HepG2 (cell line): ENCODE measurements at regions of chr1 and their contacts with region 1.

Region 1: GRCh38 chr1:102191723-102192122 is 195.0 kb upstream of the OLFM3 start:
- DNase-seq: peak; percentile 45
- ATAC-seq: peak; percentile 81
- H3K4me3 ChIP-seq: no peak overlapping the region
- H3K27ac ChIP-seq: no peak overlapping the region
- H3K4me1 ChIP-seq: no peaks in the 10 kb centered on the region
- H3K27me3 ChIP-seq: no peaks in the 10 kb centered on the region
- CTCF ChIP-seq: peak; percentile 56
- EP300 ChIP-seq: no peak
- POLR2A ChIP-seq: no peak
- RAD21 ChIP-seq: no peak

Region 2: DNA sequence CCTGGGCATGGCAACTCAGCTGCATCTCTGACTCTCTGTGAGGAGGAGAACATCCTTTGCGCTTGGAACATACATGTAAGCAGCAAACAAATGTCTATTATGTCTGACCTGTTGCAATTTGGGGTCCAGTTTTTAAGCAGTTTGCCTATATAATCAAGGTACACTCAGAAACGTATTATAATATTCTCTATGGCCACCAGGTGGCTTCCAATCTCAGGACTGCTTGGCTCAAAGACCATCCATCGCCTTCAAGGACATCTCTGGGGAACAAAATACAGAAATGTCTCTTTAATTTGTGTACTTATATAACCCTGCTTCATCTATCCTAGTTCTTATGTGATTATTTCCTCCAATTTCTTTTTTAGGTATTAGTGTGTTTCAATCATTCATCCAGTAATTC is 422.2 kb before region 1 on chr1:
- CTCF ChIA-PET with region 1: no interaction called
- POLR2A ChIA-PET with region 1: no interaction called
- in situ Hi-C with region 1: no loop called
- intact Hi-C with region 1: loop called (anchors 1 kb)
- DNase-seq: peak; percentile 9
- ATAC-seq: no peak; the same call in 2 of the 3 replicates
- H3K4me3 ChIP-seq: no peak overlapping the region
- H3K27ac ChIP-seq: no peak overlapping the region
- H3K4me1 ChIP-seq: no peaks in the 10 kb centered on the region
- H3K27me3 ChIP-seq: no peaks in the 10 kb centered on the region
- CTCF ChIP-seq: no peak
- EP300 ChIP-seq: no peak
- POLR2A ChIP-seq: no peak
- RAD21 ChIP-seq: no peak

Region 3: DNA sequence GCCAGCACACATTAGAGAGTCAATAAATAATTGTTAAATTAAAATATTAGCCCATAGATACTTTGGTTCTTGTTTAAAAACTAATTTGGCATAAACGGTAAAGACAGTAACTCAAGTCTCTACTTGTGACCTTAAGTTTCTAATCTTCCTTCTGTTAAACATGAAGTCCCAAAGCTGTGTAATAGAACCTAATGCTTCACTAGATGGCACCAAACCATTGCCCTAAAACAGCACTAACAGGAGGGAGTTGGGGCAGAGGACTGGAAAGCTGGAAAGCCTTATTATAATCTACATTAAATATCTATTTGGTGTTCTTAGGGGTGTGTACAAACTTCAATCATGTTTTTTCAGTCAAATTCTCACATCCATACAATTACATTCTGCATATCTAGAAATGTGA is 371.7 kb before region 1 on chr1:
- CTCF ChIA-PET with region 1: interaction called, 3 read pairs
- POLR2A ChIA-PET with region 1: no interaction called
- in situ Hi-C with region 1: no loop called
- intact Hi-C with region 1: loop called (anchors 1 kb)
- DNase-seq: peak; percentile 20
- ATAC-seq: peak; percentile 69
- H3K4me3 ChIP-seq: no peak overlapping the region
- H3K27ac ChIP-seq: no peak overlapping the region
- H3K4me1 ChIP-seq: no peaks in the 10 kb centered on the region
- H3K27me3 ChIP-seq: no peaks in the 10 kb centered on the region
- CTCF ChIP-seq: peak; percentile 43
- EP300 ChIP-seq: no peak
- POLR2A ChIP-seq: no peak
- RAD21 ChIP-seq: no peak